ENCODE measurements at regions of chr6 and their contacts with region 1.

Region 1: GRCh38 chr6:10694302-10695085 is at the starts of genes C6orf52 and PAK1IP1:
- DNase-seq: peak; percentile 95 to 97 (median 96)
- ATAC-seq: peak; percentile 100
- H3K4me3 ChIP-seq: peak within 1 kb of the TSS; percentile 80
- H3K27ac ChIP-seq: peak within 1 kb of the TSS; percentile 99
- H3K4me1 ChIP-seq: no peaks in the 10 kb centered on the region
- H3K27me3 ChIP-seq: no peaks in the 10 kb centered on the region
- total RNA-seq, gene C6orf52: 0.63 to 0.71 TPM in 2 of 4 donors, not detected in the others
- total RNA-seq, gene PAK1IP1: 7.7 to 12.1 (median 10.0) TPM

Region 2: DNA sequence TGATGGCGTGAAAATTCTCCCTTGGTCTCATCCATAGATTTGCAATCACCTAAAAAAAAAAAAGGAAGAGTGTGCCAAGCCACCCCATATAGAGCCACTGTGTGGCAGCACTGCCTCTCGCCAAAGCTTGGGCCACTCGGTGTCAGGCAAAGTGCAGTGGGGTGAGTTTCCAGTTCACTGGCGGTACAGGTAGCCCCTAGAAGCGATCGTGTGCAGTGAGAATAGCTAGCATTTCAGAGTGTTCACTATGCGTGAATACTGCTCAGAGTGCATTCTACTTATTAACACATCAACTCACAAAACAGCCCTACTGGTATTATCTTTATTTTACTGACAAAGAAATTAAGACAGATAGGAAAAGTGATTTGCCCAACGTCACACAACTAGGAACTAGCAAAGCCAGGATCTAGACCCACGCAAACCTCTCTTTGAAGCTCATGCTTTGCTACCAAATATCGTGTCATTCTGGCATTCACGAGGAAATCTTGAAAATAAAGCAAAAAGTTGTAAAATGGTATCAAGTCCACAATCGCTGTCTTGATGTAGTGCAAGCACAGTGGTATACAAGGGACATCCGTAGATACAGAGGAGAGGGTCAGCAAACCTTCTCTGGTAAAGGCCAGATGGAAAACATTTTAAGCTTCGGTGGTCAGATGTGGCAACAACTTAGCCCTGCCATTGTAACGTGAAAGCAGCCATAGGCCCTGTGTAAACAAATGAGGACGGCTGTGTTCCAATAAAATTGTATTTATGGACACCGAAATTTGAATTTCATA is 183.7 kb before region 1 on chr6:
- intact Hi-C with region 1: loop called in 3 of 4 experiments (anchors 5 to 10 kb)
- DNase-seq: peak; percentile 61 to 83 (median 78)
- ATAC-seq: peak; percentile 95 to 97
- H3K4me3 ChIP-seq: no peak overlapping the region
- H3K27ac ChIP-seq: peak overlapping the region; percentile 85
- H3K4me1 ChIP-seq: no peaks in the 10 kb centered on the region
- H3K27me3 ChIP-seq: no peaks in the 10 kb centered on the region

Region 3: DNA sequence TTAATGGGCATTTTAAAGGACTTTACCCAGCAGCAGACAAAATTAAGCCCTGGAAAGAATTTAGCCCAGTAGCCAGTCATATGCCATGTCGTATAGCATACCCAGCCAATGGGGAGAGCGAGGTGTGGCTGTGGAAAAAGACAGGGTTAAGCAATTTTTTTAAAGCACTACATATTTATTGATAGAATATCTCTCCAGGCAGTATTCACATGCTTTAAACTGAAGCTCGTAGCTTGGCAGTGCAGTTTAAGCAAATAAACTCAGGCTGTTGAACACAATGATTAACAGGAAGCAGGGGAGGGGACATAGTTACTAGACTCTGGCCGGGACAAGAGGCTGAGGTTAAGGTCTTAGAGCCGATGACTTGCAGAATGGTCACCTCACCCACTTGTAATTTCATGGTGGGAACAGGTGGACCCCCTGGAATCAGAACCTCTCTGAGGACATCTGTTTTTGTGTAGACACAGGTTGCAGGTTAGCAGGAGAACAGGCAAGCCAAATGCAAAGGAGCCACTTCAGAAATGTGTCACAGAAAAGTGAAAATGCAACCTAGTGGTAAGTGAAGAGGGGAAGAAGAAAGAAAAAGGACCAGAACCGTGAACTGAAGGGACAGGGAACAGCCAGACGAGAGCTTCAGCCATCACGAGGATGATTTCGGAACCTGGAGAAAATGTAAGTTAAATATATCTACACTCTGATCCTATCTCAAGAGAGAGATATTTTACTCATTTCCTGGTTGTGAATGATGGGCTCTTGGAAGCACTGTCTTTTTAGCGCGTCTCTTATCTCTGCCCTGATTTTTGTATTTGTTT is 166.1 kb before region 1 on chr6:
- intact Hi-C with region 1: loop called in 1 of 4 experiments (anchors 10 kb)
- DNase-seq: no peak
- ATAC-seq: peak; percentile 74 to 77
- H3K4me3 ChIP-seq: peak overlapping the region; percentile 70
- H3K27ac ChIP-seq: peak overlapping the region; percentile 56
- H3K4me1 ChIP-seq: no peaks in the 10 kb centered on the region
- H3K27me3 ChIP-seq: no peaks in the 10 kb centered on the region

Region 4: GRCh38 chr6:10747251-10747972 is 52.9 kb after region 1 on chr6 and contains the start of gene TMEM14B:
- intact Hi-C with region 1: loop called in 1 of 4 experiments (anchors 10 kb)
- DNase-seq: peak; percentile 100
- ATAC-seq: peak; percentile 99 to 100
- H3K4me3 ChIP-seq: peak within 1 kb of the TSS; percentile 77
- H3K27ac ChIP-seq: peak within 1 kb of the TSS; percentile 52
- H3K4me1 ChIP-seq: peaks cover 10% of the 10 kb centered on the region
- H3K27me3 ChIP-seq: no peaks in the 10 kb centered on the region
- total RNA-seq, gene TMEM14B: 92.6 to 113 (median 105) TPM

Region 5: DNA sequence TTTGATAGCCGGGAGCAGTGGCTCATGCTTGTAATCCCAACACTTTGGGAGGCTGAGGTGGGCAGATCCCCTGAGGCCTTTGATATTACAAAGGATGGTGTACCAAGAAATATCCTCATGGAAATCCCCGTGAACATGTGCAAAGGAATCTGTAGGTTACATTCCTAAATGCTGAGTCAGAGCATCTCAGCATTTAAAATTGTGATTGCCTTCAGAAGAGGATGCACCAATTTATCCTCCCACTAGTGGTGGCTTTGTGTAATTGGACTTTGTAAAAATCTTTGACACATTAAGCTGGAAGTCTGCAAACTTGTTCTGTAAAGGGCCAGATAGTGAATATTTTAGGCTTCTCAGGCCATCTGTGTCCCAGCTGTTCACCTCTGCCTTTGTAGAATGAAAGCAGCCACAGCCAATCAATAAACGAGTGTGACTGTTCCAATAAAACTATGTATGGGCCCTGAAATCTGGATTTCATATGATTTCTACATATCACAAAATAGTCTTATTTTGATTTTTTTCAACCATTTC is 64.9 kb after region 1 on chr6:
- intact Hi-C with region 1: no loop called
- DNase-seq: no peak
- ATAC-seq: peak in 1 of 2 donors; percentile 36
- H3K4me3 ChIP-seq: no peak overlapping the region
- H3K27ac ChIP-seq: no peak overlapping the region
- H3K4me1 ChIP-seq: peaks cover 3% of the 10 kb centered on the region
- H3K27me3 ChIP-seq: no peaks in the 10 kb centered on the region

Measured in right cardiac atrium (tissue), 5 donors.